Activated naive CD4-positive, alpha-beta T cell treated with anti-CD3 and anti-CD28 coated beads for 36 hours (primary cell): ENCODE measurements at regions of chr7 and their contacts with region 1.

Region 1: GRCh38 chr7:35694781-35695472 is at the start of gene HERPUD2:
- DNase-seq: peak; percentile 92
- H3K4me3 Mint-ChIP-seq: peak within 1 kb of the TSS; percentile 94
- H3K27ac Mint-ChIP-seq: peak within 1 kb of the TSS; percentile 96
- H3K4me1 Mint-ChIP-seq: peaks cover 35% of the 10 kb centered on the region
- H3K27me3 Mint-ChIP-seq: no peaks in the 10 kb centered on the region
- total RNA-seq, gene HERPUD2: 20.3 to 22.4 TPM

Region 2: GRCh38 chr7:35571611-35572240 is 123.2 kb before region 1 on chr7:
- CTCF ChIA-PET with region 1: no interaction called
- intact Hi-C with region 1: no loop called
- DNase-seq: no peak
- H3K4me3 Mint-ChIP-seq: no peak overlapping the region
- H3K27ac Mint-ChIP-seq: no peak overlapping the region
- H3K4me1 Mint-ChIP-seq: no peaks in the 10 kb centered on the region
- H3K27me3 Mint-ChIP-seq: no peaks in the 10 kb centered on the region

Region 3: DNA sequence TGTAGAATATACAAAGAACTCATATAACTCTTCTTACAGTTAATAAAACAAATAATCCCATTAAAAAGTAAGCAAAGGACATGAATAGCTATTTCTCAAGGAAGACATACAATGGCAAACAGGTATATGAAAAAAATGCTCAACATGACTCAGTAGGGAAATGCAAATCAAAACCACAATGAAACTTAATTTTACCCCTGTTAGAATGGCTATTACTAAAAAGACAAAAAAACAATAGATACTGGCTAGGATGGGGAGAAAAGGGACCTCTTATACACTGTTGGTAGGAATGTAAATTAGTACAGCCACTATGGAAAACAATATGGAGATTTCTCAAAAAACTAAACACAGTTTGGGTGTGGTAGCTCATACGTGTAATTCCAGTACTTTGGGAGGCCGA is 37.8 kb before region 1 on chr7:
- CTCF ChIA-PET with region 1: interaction called, 3 read pairs
- intact Hi-C with region 1: loop called (anchors 2 kb)
- DNase-seq: no peak
- H3K4me3 Mint-ChIP-seq: no peak overlapping the region
- H3K27ac Mint-ChIP-seq: peak overlapping the region; percentile 44
- H3K4me1 Mint-ChIP-seq: peaks cover 54% of the 10 kb centered on the region
- H3K27me3 Mint-ChIP-seq: no peaks in the 10 kb centered on the region

Region 4: DNA sequence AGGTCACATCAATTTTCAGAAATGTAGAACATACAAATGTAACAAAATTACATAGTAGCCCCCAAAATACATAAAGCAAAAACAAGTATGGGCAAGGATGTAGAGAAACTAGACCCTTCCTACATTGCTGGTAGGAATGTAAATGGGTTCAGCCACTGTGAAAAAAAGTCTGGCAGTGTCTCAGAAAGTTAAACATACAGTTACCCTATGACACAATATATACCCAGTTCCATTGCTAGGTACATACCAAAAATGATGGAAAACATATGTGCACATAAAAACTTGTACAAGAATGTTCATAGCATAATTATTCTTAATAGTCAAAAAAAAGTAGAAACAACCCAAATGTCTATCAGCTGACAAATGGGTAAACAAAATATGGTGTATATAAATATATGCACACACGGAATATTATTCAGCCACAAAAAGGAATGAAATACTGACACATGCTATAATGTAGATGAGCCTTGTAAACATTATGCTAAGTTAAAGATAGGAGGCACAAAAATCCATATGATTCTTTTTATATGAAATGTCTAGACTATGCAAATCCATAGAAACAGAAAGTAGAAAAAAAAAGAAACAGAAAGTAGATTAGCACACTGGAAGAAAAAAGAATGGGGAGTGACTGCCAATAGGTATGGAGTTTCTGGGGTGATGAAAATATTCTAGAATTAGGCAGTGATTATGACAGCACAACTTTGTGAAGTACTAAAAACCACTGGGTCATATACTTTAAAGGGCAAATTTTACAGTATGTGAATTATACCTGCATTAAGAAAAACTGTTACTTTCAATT is 13.5 kb before region 1 on chr7:
- CTCF ChIA-PET with region 1: interaction called, 4 read pairs
- intact Hi-C with region 1: loop called (anchors 1 kb)
- DNase-seq: no peak
- H3K4me3 Mint-ChIP-seq: peak overlapping the region; percentile 4
- H3K27ac Mint-ChIP-seq: no peak overlapping the region
- H3K4me1 Mint-ChIP-seq: peaks cover 61% of the 10 kb centered on the region
- H3K27me3 Mint-ChIP-seq: no peaks in the 10 kb centered on the region

Region 5: GRCh38 chr7:35707422-35707821 is 12.5 kb after region 1 on chr7:
- CTCF ChIA-PET with region 1: interaction called, 16 read pairs
- intact Hi-C with region 1: no loop called
- DNase-seq: no peak
- H3K4me3 Mint-ChIP-seq: no peak overlapping the region
- H3K27ac Mint-ChIP-seq: no peak overlapping the region
- H3K4me1 Mint-ChIP-seq: peaks cover 7% of the 10 kb centered on the region
- H3K27me3 Mint-ChIP-seq: no peaks in the 10 kb centered on the region

Region 6: DNA sequence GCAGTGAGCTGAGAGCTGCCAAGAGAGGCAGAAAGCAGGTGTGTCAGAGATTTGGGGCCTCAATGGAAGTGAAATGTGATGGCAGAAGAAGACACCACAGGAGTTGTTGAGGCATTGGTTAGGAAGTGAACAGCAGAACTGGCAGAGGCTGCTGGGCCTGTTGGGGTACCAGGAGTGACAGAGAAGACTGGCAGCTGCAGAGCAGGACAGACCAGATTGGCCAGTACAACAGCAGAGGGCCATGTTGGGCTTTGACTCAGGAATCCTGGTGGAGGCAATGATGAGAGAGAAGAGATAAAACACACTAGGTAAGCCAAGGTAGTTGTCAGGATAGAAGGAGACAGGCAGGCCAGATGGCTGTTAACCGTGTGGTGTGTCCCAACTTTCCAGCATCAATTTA is 19.9 kb after region 1 on chr7:
- CTCF ChIA-PET with region 1: interaction called, 16 read pairs
- intact Hi-C with region 1: no loop called
- DNase-seq: peak; percentile 23
- H3K4me3 Mint-ChIP-seq: no peak overlapping the region
- H3K27ac Mint-ChIP-seq: no peak overlapping the region
- H3K4me1 Mint-ChIP-seq: peaks cover 2% of the 10 kb centered on the region
- H3K27me3 Mint-ChIP-seq: no peaks in the 10 kb centered on the region

Region 7: GRCh38 chr7:35723011-35723410 is 28.1 kb after region 1 on chr7:
- CTCF ChIA-PET with region 1: interaction called, 3 read pairs
- intact Hi-C with region 1: loop called (anchors 1 kb)
- DNase-seq: peak; percentile 22
- H3K4me3 Mint-ChIP-seq: no peak overlapping the region
- H3K27ac Mint-ChIP-seq: peak overlapping the region; percentile 59
- H3K4me1 Mint-ChIP-seq: peaks cover 43% of the 10 kb centered on the region
- H3K27me3 Mint-ChIP-seq: no peaks in the 10 kb centered on the region

Region 8: DNA sequence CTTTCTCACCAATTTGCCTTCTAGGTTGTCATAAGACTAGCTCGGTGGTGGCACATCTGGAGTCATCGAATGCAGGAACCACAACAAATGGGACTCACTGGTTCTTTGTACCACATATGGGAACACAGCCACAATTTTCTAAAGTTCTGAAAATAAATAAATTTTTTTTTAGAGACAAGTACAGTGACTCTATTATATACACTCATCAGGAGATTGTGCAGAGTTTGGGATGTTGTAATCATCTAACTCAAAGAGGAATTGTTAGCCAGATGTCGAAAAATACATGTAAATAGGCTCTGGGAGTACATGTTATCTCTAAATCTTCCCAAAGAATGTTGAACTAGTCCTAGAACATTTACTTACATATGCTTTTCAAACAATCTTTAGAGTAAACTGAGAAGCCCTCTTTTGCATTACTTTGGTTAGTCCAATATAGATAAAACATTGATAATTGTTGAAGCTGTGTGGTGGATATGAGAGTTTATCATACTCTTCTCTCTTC is 86.3 kb after region 1 on chr7:
- CTCF ChIA-PET with region 1: no interaction called
- intact Hi-C with region 1: no loop called
- DNase-seq: no peak
- H3K4me3 Mint-ChIP-seq: no peak overlapping the region
- H3K27ac Mint-ChIP-seq: no peak overlapping the region
- H3K4me1 Mint-ChIP-seq: no peaks in the 10 kb centered on the region
- H3K27me3 Mint-ChIP-seq: no peaks in the 10 kb centered on the region

Region 9: GRCh38 chr7:36152756-36153570 is 458.0 kb after region 1 on chr7 and contains the start of gene EEPD1:
- CTCF ChIA-PET with region 1: no interaction called
- intact Hi-C with region 1: loop called (anchors 2 kb)
- DNase-seq: peak; percentile 100
- H3K4me3 Mint-ChIP-seq: peak within 1 kb of the TSS; percentile 72
- H3K27ac Mint-ChIP-seq: no peak within 1 kb of the TSS
- H3K4me1 Mint-ChIP-seq: peaks cover 18% of the 10 kb centered on the region
- H3K27me3 Mint-ChIP-seq: no peaks in the 10 kb centered on the region
- total RNA-seq, gene EEPD1: 0.49 to 0.50 TPM